HAP-1 (cell line): ENCODE measurements at regions of chr22 and their contacts with region 1.

Region 1: DNA sequence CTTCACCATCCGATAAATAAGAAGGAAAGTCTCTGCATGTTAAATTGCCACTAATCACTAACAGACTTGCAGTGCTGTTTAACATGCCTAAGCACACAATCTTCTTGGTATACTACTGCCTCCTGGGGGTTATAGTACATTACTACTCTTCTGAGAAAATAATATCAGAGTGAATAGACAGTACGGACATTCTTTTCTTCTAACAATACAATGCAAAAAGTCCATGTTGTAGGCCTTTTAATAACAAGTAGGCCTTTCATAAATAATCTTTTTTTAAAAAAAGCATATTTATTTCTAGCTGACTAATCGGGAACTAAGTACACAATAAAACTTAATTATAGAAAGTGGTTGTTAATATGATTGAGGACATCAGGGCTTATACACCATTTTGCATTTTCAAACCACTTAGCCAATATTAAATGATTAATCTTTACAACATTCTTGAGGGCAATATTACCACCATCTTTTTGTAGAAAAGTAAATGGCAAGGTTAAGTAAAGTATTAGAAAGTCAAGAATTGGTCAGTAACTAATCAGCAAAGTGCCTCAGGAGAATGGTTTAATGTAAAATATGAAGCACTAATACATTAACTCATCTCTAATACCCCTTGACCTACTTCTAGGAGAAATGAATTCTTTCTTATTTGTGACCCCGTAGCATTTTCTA is 84.7 kb downstream of the TTC28 start:
- DNase-seq: peak in 1 of 2 experiments; percentile 84
- H3K4me3 ChIP-seq: no peak overlapping the region
- H3K4me1 ChIP-seq: peaks cover 7% of the 10 kb centered on the region
- H3K27me3 ChIP-seq: no peaks in the 10 kb centered on the region

Region 2: DNA sequence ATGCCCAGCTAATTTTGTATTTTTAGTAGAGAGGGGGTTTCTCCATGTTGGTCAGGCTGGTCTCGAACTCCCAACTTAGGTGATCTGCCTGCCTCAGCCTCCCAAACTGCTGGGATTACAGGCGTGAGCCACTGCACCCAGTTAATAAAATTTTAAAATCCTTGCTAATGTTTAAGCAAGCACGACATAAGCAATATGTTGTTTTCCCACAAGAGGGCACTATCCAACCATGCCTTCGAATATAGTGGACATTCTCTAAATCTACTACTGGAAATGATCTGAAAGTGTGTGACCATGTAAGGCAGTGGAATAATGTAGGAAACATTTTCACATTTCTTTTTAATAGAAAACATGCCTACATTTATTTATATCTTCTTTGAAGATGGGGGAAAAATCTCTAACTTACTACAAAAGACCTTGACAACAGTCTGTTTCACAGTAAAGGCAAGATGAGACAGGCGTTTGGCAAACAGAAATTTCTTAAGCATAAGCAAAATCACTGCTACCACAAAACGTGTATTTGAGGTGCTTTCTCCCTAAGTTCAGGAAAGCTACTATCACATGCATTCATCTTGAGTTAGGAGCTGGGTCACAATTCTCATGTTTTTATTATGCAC is 714.0 kb before region 1 on chr22:
- in situ Hi-C with region 1: loop called (anchors 25 kb)
- DNase-seq: peak; percentile 65 to 80
- H3K4me3 ChIP-seq: no peak overlapping the region
- H3K4me1 ChIP-seq: peaks cover 30% of the 10 kb centered on the region
- H3K27me3 ChIP-seq: no peaks in the 10 kb centered on the region

Region 3: GRCh38 chr22:28316014-28316413 is 278.9 kb before region 1 on chr22:
- in situ Hi-C with region 1: no loop called
- DNase-seq: no peak
- H3K4me3 ChIP-seq: no peak overlapping the region
- H3K4me1 ChIP-seq: no peaks in the 10 kb centered on the region
- H3K27me3 ChIP-seq: no peaks in the 10 kb centered on the region